PC-9 (cell line): ENCODE measurements at regions of chr18 and their contacts with region 1.

Region 1: GRCh38 chr18:3380384-3380961 is 69.5 kb upstream of the TGIF1 start:
- DNase-seq: peak in 1 of 2 experiments; percentile 81
- H3K4me3 ChIP-seq: peak overlapping the region; percentile 35; the same call in 1 of the 2 replicates
- H3K27ac ChIP-seq: peak overlapping the region; percentile 99
- H3K4me1 ChIP-seq: peaks cover 64% of the 10 kb centered on the region
- H3K27me3 ChIP-seq: no peaks in the 10 kb centered on the region
- CTCF ChIP-seq: peak; percentile 44; the same call in 1 of the 2 replicates

Region 2: DNA sequence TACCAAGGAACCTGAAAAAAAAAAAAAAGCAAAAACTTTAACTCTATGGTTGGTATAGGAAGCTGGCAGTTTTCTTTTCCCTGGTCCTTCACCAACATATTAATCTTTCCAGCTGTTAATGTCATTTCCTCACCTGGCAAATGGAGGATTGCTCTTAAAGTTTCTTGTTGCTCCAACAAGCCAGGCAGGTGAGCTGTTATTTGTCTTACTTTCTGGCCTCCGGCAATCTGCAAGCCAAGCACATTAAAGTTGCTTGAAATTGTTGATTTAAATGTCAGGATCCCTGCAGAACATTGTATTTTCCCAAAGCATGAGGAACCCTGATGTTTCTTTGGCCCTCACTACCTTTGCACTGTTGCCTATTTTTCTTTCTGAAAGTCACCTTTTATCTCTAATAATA is 1474.1 kb before region 1 on chr18:
- CTCF ChIA-PET with region 1: no interaction called
- POLR2A ChIA-PET with region 1: no interaction called
- intact Hi-C with region 1: no loop called
- DNase-seq: no peak
- H3K4me3 ChIP-seq: no peak overlapping the region
- H3K27ac ChIP-seq: no peak overlapping the region
- H3K4me1 ChIP-seq: no peaks in the 10 kb centered on the region
- H3K27me3 ChIP-seq: no peaks in the 10 kb centered on the region
- CTCF ChIP-seq: no peak

Region 3: DNA sequence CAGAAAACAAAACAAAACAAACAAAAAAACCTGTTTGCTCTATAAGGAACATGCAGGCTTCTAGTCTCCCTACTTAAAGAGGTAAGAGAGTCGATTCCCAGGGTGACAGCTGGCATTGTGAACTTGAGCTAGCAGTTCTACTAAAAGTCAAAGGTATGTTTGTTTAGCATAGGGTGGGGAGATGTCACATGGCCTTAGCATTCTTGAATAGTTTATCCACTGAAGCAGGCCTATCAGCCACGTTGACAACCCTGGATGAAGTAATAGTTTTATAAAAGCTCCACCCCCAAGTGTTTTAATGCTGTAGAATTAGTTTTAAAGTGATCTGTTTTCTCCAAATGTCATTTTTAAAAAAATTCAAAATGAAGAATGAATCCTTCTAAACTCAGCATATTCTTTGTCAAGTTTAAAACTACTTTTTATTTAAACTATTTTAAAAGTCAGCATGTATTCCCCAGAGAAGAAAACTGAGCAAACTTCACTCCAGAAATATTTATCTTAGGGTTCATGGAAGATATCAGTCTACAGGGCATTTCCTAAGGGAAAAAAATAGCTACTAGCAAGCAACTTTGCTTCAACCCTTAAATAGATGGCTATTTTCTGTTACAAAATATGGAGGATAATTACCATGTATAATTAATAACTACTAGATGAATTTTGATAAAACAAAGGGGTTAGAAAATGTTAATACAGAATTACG is 162.4 kb before region 1 on chr18:
- CTCF ChIA-PET with region 1: no interaction called
- POLR2A ChIA-PET with region 1: interaction called, 11 read pairs
- intact Hi-C with region 1: no loop called
- DNase-seq: peak; percentile 38 to 87
- H3K4me3 ChIP-seq: no peak overlapping the region
- H3K27ac ChIP-seq: peak overlapping the region; percentile 45
- H3K4me1 ChIP-seq: peaks cover 18% of the 10 kb centered on the region
- H3K27me3 ChIP-seq: no peaks in the 10 kb centered on the region
- CTCF ChIP-seq: no peak

Region 4: DNA sequence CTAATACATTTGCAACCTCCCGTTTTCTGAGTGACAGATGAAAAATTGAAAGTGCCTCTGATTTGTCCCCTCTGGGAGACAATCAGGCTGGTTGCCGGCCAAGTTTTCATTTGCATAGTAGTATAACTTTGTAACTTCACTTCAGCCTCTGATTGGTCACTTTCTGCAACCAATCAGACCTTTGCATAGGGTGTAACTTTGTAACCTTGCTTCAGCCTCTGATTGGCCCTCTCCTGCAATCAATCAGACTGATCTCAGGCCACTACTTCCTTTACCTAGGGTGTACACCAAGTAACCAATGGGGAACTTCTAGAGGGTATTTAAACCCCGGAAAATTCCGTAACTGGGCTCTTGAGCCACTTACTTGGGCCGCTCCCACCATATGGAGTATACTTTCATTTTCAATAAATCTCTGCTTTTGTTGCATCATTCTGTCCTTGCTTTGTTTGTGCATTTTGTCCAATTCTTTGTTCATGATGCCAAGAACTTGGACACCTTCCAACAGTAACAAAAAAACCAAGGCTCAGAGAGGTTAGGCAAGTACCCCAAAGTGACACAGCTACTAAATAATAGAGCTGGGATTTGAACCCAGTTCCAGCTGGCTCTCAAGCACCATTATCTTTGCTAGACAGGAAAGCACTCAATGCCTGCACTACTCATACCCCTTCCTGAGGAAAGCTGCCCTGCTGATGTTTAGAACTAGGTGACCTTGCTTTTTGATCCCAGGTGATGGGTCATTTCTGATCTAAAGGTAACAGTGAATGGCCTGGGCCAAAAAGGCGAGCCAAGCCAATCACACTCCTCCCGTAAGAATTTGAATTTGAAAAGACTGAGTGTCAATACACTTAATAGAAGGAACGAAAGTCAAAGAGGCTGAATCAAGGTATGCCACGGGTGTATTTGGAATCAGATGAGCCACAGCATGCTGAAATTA is 149.8 kb before region 1 on chr18:
- CTCF ChIA-PET with region 1: no interaction called
- POLR2A ChIA-PET with region 1: no interaction called
- intact Hi-C with region 1: no loop called
- DNase-seq: peak in 1 of 2 experiments; percentile 43
- H3K4me3 ChIP-seq: no peak overlapping the region
- H3K27ac ChIP-seq: no peak overlapping the region
- H3K4me1 ChIP-seq: peaks cover 9% of the 10 kb centered on the region
- H3K27me3 ChIP-seq: no peaks in the 10 kb centered on the region
- CTCF ChIP-seq: no peak

Region 5: DNA sequence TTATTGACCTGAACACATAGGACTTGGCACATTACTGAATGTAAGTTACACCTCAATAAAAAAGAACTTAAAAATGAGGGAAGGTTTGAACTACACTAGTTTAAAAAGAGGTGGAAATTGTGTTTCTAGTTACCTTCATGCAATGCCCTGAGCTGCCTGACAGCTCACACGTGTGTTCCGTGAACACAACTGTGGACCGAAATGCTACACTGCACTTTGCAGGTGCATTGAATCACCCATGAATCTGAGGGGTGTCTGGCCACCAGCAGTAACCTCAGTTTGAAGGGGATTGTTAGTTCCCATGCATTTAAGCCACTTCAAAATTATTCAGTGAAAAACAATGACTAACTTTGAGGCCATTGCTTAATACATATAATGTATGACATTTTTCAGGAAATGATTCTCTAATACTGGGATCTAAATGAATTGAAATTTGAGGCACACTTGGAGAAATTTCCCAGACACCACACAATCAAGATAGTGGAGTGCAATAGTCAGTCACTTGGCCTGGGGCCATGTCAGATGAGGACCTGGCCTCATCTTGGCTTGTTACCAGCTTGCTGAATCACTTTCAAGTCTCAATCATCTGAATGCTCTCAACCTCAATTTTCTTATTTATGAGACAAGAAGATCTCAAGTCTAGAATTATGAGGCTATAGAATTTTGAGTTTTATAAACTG is 59.2 kb before region 1 on chr18:
- CTCF ChIA-PET with region 1: interaction called, 11 read pairs
- POLR2A ChIA-PET with region 1: interaction called, 5 read pairs
- intact Hi-C with region 1: loop called (anchors 2 kb)
- DNase-seq: peak; percentile 88 to 93
- H3K4me3 ChIP-seq: no peak overlapping the region
- H3K27ac ChIP-seq: peak overlapping the region; percentile 74
- H3K4me1 ChIP-seq: peaks cover 32% of the 10 kb centered on the region
- H3K27me3 ChIP-seq: no peaks in the 10 kb centered on the region
- CTCF ChIP-seq: no peak

Region 6: DNA sequence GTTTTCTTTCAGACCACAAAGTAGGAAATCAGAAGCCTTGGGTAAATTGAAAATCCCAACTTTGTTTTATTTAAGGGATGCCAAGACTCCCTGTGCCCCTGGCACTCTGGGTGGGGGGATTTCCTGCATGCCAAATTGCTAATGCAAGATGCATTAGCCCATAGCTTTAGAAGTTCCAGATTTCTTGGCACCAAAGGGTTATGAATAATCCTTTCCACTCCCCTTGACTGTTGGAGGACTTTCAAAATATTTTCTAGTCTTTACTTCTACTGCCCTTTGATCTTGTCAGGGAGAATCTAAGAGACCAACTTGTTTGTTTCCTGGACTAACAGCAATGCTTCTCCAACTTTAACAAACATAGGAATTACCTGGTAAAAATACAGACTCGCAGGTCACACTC is 12.3 kb before region 1 on chr18:
- CTCF ChIA-PET with region 1: no interaction called
- POLR2A ChIA-PET with region 1: interaction called, 15 read pairs
- intact Hi-C with region 1: loop called (anchors 1 kb)
- DNase-seq: peak; percentile 31 to 47
- H3K4me3 ChIP-seq: no peak overlapping the region
- H3K27ac ChIP-seq: peak overlapping the region; percentile 79
- H3K4me1 ChIP-seq: 0 out of 2 replicates have a peak, but pooled peaks cover 16% of the 10 kb centered on the region
- H3K27me3 ChIP-seq: no peaks in the 10 kb centered on the region
- CTCF ChIP-seq: no peak

Region 7: DNA sequence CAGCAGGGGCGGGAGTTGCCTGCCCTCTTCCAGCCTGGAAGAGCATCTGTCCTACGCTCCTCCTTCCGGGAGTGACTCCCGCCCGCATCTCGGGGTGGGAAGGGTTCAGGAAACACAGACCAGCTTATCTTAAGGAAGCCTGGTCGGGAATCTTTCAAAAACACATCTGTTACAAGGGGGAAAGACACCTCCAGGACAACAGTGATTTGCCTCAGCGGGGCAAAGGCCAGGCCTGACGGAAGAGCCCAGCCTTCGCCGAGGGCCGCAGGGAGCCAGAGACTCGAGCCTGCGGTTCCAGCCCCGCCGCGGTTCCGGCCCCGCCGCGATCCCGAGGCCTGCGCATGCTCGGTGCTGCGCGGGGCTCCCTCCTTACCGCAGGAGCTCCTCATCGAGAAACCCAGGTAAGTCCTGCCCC is 31.4 kb after region 1 on chr18:
- CTCF ChIA-PET with region 1: interaction called, 6 read pairs
- POLR2A ChIA-PET with region 1: interaction called, 77 read pairs
- intact Hi-C with region 1: loop called (anchors 1 kb)
- DNase-seq: peak; percentile 72 to 86
- H3K4me3 ChIP-seq: peak overlapping the region; percentile 68
- H3K27ac ChIP-seq: peak overlapping the region; percentile 96
- H3K4me1 ChIP-seq: peaks cover 58% of the 10 kb centered on the region
- H3K27me3 ChIP-seq: no peaks in the 10 kb centered on the region
- CTCF ChIP-seq: no peak

Region 8: DNA sequence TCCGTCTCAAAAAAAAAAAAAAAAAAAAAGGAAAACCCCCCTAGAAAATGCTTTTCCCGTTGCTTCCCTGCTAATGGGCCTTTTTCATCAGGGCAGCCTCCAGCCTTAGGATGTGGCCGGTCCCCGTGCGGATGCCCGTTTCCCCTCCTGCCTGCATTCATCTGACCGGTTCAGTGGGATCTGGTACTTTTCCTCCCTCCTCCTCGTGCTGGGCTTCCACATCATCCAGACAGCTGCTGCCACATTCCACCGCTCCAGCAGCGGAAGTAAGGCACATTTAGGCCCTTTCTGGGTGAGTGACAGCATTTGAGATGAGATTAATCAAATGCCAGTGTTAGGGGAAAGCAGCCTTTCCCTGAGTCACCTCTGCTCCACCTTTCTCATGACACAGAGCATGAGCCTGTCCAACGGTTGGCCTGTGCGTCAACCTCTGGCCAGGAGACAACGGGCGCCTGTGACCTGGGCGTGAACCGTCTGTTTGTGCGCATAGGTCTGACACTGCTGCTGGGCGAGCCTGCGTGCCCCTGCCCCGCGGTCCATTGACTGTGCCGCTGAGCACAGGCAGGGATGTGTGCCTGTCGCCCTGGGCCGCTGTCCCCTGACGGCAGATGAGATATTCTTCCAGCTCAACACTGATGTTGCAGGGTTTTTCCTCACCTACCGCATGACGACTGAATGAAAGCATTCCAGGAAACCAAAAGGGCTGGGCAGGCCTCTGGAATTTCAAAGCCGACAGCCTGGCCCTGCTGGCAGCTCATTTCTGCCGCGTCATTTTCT is 243.5 kb after region 1 on chr18:
- CTCF ChIA-PET with region 1: no interaction called
- POLR2A ChIA-PET with region 1: interaction called, 15 read pairs
- intact Hi-C with region 1: loop called (anchors 1 kb)
- DNase-seq: peak; percentile 94 to 98
- H3K4me3 ChIP-seq: peak overlapping the region; percentile 58
- H3K27ac ChIP-seq: peak overlapping the region; percentile 100
- H3K4me1 ChIP-seq: peaks cover 62% of the 10 kb centered on the region
- H3K27me3 ChIP-seq: no peaks in the 10 kb centered on the region
- CTCF ChIP-seq: no peak